ENCODE measurements at regions of chr10 and their contacts with region 1.

Region 1: DNA sequence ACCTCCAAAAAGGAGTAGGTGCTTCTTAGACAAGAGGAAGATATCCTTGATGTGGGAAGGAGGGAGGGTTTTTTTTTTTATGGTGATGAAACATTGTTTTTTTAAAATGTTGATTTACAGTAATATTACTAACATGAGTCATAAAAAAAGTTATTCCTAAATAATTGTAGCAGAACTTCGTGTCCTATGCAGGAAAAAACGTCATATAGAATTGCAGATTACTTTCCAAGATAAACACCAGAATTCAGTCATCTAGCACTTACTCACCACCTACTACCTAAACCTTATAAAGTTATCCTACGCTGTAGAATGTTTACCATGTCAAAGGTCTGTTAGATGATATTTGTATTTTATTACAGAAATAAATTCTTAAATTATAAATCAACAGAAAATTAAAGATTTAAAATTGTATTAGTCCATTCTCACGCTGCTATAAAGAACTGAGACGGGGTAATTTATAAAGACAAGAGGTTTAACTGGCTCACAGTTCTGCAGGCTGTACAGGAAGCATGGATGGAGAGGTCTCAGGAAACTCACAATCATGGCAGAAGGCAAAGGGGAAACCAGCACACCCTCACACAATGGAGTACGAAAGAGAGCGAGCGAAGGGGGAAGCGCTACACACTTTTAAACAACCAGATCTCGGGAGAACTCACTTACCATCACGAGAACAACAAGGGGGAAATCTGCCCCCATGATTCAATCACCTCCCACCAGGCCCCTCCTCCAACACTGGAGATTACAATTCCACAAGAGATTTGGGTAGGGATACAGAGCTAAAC is 105.2 kb upstream of the NEBL start:
- DNase-seq: no peak
- H3K4me3 ChIP-seq: no peak overlapping the region
- H3K27ac ChIP-seq: no peak overlapping the region
- H3K4me1 ChIP-seq: no peaks in the 10 kb centered on the region
- H3K27me3 ChIP-seq: no peaks in the 10 kb centered on the region
- CTCF ChIP-seq: no peak
- POLR2A ChIP-seq: no peak

Region 2: DNA sequence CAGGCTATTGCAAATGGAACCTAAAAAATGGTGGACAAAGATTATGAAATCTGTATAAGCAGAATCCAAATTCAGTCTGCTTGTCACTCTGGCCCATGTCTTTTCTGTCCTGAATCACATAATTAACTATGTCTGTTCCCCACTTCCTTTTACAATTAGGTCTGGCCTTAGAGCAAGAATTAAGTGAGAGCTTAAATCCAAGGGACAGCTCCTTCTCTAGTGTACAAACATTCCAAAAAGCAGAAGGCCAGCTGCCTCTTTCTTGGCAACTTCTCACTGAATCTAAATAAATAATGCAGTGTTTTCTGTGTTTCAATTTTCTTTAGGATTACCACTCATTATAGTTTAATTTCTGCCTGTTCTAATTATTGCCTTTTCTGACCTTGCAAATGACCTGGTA is 65.9 kb before region 1 on chr10:
- intact Hi-C with region 1: loop called (anchors 5 kb)
- DNase-seq: no peak
- H3K4me3 ChIP-seq: no peak overlapping the region
- H3K27ac ChIP-seq: no peak overlapping the region
- H3K4me1 ChIP-seq: no peaks in the 10 kb centered on the region
- H3K27me3 ChIP-seq: no peaks in the 10 kb centered on the region
- CTCF ChIP-seq: no peak
- POLR2A ChIP-seq: no peak